ENCODE measurements at regions of chr17 and their contacts with region 1.

Region 1: DNA sequence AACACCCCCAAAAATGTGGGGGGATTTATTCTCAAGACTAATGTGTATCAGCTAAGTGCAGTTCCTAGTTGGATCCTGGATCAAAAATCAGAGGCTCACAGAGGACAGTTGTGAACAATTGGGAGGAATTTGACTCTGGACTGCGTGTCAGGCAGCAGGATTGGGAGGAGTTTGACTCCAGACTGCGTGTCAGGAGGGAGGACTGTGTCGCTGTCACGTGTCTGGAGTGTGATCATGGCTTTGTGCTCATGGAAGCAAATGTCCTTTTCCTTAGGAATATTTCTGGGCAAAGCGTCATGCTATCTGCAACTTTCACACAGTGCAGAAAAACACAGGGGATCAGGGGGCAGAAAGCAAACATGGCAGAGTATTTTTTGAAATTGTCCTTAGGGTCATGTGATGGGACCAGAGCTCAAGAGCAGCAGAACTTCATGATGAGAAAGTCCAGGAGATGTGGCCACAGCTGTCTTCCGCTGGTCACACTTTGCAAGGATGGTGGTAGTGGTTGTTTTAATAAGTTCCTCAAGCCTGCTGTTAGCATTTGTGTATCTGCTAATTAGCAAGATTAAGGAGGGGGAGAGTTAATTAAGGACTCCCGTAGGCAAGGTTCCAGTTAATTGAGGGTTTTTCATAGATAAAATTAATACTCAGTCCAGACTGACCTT is 122.0 kb upstream of the CHMP6 start:
- DNase-seq: no peak
- CTCF ChIP-seq: no peak

Region 2: GRCh38 chr17:80839511-80839941 is 30.1 kb before region 1 on chr17:
- CTCF ChIA-PET with region 1: no interaction called
- POLR2A ChIA-PET with region 1: no interaction called
- DNase-seq: no peak
- CTCF ChIP-seq: no peak

Region 3: GRCh38 chr17:80859324-80860150 is 10.1 kb before region 1 on chr17:
- CTCF ChIA-PET with region 1: interaction called, 10 read pairs
- POLR2A ChIA-PET with region 1: no interaction called
- DNase-seq: no peak
- CTCF ChIP-seq: no peak